GM12878 (cell line): ENCODE measurements at regions of chr15 and their contacts with region 1.

Region 1: DNA sequence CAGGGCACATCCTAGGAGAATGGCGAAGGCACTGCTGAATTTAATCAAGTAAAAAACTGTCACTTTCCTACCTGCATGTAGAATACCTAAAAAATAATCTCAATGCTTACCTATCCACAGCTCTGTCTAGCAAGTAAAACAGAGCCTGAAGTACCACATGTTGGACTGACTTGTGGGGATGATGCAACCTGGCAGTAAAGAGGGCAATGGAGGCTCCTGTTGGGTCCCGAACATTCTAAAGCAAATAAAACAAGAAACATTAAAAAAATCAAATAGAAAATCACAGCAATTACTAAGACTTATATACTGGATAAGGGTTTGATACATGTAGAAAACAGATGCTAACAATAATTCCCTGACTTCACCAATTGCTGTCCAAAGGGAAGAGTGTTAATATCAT is 56.1 kb downstream of the PTPN9 start:
- DNase-seq: no peak
- ATAC-seq: no peak
- H3K4me3 ChIP-seq: no peak overlapping the region
- H3K27ac ChIP-seq: no peak overlapping the region
- H3K4me1 ChIP-seq: no peaks in the 10 kb centered on the region
- H3K27me3 ChIP-seq: no peaks in the 10 kb centered on the region
- CTCF ChIP-seq: no peak
- EP300 ChIP-seq: no peak
- POLR2A ChIP-seq: no peak
- RAD21 ChIP-seq: no peak

Region 2: GRCh38 chr15:74913041-74913440 is 610.0 kb before region 1 on chr15:
- CTCF ChIA-PET with region 1: no interaction called
- POLR2A ChIA-PET with region 1: no interaction called
- RAD21 ChIA-PET with region 1: no interaction called
- SMC1A ChIA-PET with region 1: no interaction called
- in situ Hi-C with region 1: no loop called
- intact Hi-C with region 1: no loop called
- DNase-seq: no peak
- ATAC-seq: no peak
- H3K4me3 ChIP-seq: no peak overlapping the region
- H3K27ac ChIP-seq: no peak overlapping the region
- H3K4me1 ChIP-seq: no peaks in the 10 kb centered on the region
- H3K27me3 ChIP-seq: no peaks in the 10 kb centered on the region
- CTCF ChIP-seq: no peak
- EP300 ChIP-seq: no peak
- POLR2A ChIP-seq: no peak
- RAD21 ChIP-seq: no peak

Region 3: GRCh38 chr15:75483961-75484360 is 39.0 kb before region 1 on chr15:
- CTCF ChIA-PET with region 1: no interaction called
- POLR2A ChIA-PET with region 1: no interaction called
- RAD21 ChIA-PET with region 1: no interaction called
- SMC1A ChIA-PET with region 1: no interaction called
- in situ Hi-C with region 1: no loop called
- intact Hi-C with region 1: no loop called
- DNase-seq: no peak
- ATAC-seq: no peak
- H3K4me3 ChIP-seq: no peak overlapping the region
- H3K27ac ChIP-seq: no peak overlapping the region
- H3K4me1 ChIP-seq: no peaks in the 10 kb centered on the region
- H3K27me3 ChIP-seq: no peaks in the 10 kb centered on the region
- CTCF ChIP-seq: no peak
- EP300 ChIP-seq: no peak
- POLR2A ChIP-seq: no peak
- RAD21 ChIP-seq: no peak

Region 4: GRCh38 chr15:75565062-75565970 is 42.3 kb after region 1 on chr15:
- CTCF ChIA-PET with region 1: no interaction called
- POLR2A ChIA-PET with region 1: interaction called, 3 read pairs
- RAD21 ChIA-PET with region 1: no interaction called
- SMC1A ChIA-PET with region 1: no interaction called
- in situ Hi-C with region 1: no loop called
- intact Hi-C with region 1: loop called (anchors 5 kb)
- DNase-seq: no peak
- ATAC-seq: no peak
- H3K4me3 ChIP-seq: no peak overlapping the region
- H3K27ac ChIP-seq: no peak overlapping the region
- H3K4me1 ChIP-seq: no peaks in the 10 kb centered on the region
- H3K27me3 ChIP-seq: no peaks in the 10 kb centered on the region
- CTCF ChIP-seq: no peak
- EP300 ChIP-seq: no peak
- POLR2A ChIP-seq: no peak
- RAD21 ChIP-seq: no peak

Region 5: GRCh38 chr15:75809986-75810750 is 287.2 kb after region 1 on chr15:
- CTCF ChIA-PET with region 1: no interaction called
- POLR2A ChIA-PET with region 1: no interaction called
- RAD21 ChIA-PET with region 1: no interaction called
- SMC1A ChIA-PET with region 1: no interaction called
- in situ Hi-C with region 1: no loop called
- intact Hi-C with region 1: no loop called
- DNase-seq: no peak
- ATAC-seq: peak; percentile 85
- H3K4me3 ChIP-seq: no peak overlapping the region
- H3K27ac ChIP-seq: no peak overlapping the region
- H3K4me1 ChIP-seq: no peaks in the 10 kb centered on the region
- H3K27me3 ChIP-seq: no peaks in the 10 kb centered on the region; a peak in 1 of 4 replicates
- CTCF ChIP-seq: peak; percentile 45 to 68 (median 55); a peak in 5 of 6 replicates
- EP300 ChIP-seq: no peak
- POLR2A ChIP-seq: no peak
- RAD21 ChIP-seq: peak; percentile 71